G401 (cell line): ENCODE measurements at regions of chr2 and their contacts with region 1.

Region 1: GRCh38 chr2:158473719-158474392 is 17.1 kb downstream of the PKP4 start:
- DNase-seq: no peak

Region 2: GRCh38 chr2:158518075-158518474 is 44.2 kb after region 1 on chr2:
- in situ Hi-C with region 1: no loop called
- DNase-seq: no peak

Region 3: DNA sequence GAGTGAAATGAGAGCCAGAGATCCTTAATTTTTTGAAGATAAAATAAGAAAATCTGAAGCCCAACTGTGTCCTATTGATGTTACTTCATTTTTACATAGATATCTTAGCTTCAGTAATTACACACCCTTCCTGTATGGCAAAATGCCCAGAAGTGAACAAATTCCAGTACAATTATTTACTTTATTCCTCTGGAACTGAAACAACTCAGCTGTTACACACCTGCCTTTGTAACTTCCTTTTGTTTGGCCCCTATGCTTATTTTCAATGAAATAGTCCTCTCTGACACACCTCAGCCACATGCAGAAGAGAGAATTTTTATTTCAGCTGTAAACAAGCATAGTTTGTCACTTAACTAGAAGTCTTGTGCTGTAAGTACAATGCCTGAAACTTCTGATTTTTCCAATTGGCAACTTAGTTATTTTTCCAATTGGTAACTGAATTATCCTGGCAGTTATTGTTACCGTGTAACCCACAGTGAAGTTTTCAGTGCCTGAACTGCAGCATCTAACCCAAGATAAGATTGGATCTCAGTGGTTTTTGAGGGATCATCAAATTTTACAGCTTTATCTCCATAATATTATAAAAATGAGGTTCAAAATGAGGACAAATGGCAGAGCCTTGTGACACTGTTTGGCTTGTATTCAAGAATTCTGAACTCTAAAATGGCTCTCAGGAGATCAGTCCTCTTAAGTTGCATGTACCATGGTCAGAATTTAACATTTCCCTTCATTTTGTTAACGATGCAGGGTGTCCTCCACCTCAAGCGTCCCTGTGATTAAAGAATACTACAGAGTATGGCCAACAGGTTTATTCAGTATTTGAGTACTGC is 65.5 kb after region 1 on chr2:
- in situ Hi-C with region 1: loop called (anchors 10 kb)
- DNase-seq: no peak